ENCODE measurements at regions of chr6 and their contacts with region 1.

Region 1: DNA sequence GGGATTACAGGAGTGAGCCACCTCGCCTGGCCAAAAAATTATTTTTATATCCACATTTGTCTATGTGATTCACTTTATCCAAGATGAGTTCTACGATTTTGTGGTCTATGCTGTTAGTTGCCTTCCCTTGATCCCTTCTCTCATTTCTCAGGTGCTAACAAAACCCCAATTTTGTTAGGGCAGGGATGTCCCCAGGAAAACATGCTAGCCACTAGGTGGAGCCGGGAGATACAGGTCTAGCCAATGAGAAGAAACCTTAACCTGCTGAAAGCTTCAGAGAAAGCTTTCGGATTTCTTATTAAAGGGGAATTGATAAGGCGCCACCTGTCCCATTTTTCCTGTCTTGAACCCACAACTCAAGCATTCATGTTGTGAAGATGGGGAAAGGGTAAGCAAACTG is 167.4 kb upstream of the OLIG3 start:
- DNase-seq: peak; percentile 65
- ATAC-seq: peak; percentile 49
- H3K4me3 ChIP-seq: no peak overlapping the region
- H3K4me3 Mint-ChIP-seq: no peak overlapping the region
- H3K27ac ChIP-seq: no peak overlapping the region
- H3K27ac Mint-ChIP-seq: no peak overlapping the region
- H3K4me1 ChIP-seq: no peaks in the 10 kb centered on the region
- H3K4me1 Mint-ChIP-seq: no peaks in the 10 kb centered on the region
- H3K27me3 ChIP-seq: no peaks in the 10 kb centered on the region
- H3K27me3 Mint-ChIP-seq: peaks cover 7% of the 10 kb centered on the region
- CTCF ChIP-seq: peak; percentile 58

Region 2: GRCh38 chr6:137975188-137975940 is 313.8 kb after region 1 on chr6:
- CTCF ChIA-PET with region 1: interaction called, 21 read pairs
- POLR2A ChIA-PET with region 1: no interaction called
- intact Hi-C with region 1: loop called (anchors 1 kb)
- DNase-seq: peak; percentile 57
- ATAC-seq: no peak
- H3K4me3 ChIP-seq: no peak overlapping the region
- H3K4me3 Mint-ChIP-seq: peak overlapping the region; percentile 3
- H3K27ac ChIP-seq: peak overlapping the region in 1 of 2 donors; percentile 68
- H3K27ac Mint-ChIP-seq: peak overlapping the region; percentile 12
- H3K4me1 ChIP-seq: peaks cover 8 to 17% of the 10 kb centered on the region in 2 donors
- H3K4me1 Mint-ChIP-seq: peaks cover 8% of the 10 kb centered on the region
- H3K27me3 ChIP-seq: no peaks in the 10 kb centered on the region
- H3K27me3 Mint-ChIP-seq: no peaks in the 10 kb centered on the region
- CTCF ChIP-seq: peak; percentile 56

Region 3: GRCh38 chr6:138109042-138109997 is 447.7 kb after region 1 on chr6:
- CTCF ChIA-PET with region 1: interaction called, 5 read pairs
- POLR2A ChIA-PET with region 1: no interaction called
- intact Hi-C with region 1: loop called (anchors 2 kb)
- DNase-seq: peak; percentile 81
- ATAC-seq: peak; percentile 66
- H3K4me3 ChIP-seq: no peak overlapping the region
- H3K4me3 Mint-ChIP-seq: peak overlapping the region; percentile 11
- H3K27ac ChIP-seq: no peak overlapping the region
- H3K27ac Mint-ChIP-seq: no peak overlapping the region
- H3K4me1 ChIP-seq: peaks cover 14 to 19% of the 10 kb centered on the region in 2 donors
- H3K4me1 Mint-ChIP-seq: peaks cover 18% of the 10 kb centered on the region
- H3K27me3 ChIP-seq: peaks cover 0 to 42% (median 33%) of the 10 kb centered on the region in 4 experiments
- H3K27me3 Mint-ChIP-seq: peaks cover 48% of the 10 kb centered on the region
- CTCF ChIP-seq: peak; percentile 99

Measured in B cell (primary cell).